ENCODE measurements at regions of chr1 and their contacts with region 1.

Region 1: DNA sequence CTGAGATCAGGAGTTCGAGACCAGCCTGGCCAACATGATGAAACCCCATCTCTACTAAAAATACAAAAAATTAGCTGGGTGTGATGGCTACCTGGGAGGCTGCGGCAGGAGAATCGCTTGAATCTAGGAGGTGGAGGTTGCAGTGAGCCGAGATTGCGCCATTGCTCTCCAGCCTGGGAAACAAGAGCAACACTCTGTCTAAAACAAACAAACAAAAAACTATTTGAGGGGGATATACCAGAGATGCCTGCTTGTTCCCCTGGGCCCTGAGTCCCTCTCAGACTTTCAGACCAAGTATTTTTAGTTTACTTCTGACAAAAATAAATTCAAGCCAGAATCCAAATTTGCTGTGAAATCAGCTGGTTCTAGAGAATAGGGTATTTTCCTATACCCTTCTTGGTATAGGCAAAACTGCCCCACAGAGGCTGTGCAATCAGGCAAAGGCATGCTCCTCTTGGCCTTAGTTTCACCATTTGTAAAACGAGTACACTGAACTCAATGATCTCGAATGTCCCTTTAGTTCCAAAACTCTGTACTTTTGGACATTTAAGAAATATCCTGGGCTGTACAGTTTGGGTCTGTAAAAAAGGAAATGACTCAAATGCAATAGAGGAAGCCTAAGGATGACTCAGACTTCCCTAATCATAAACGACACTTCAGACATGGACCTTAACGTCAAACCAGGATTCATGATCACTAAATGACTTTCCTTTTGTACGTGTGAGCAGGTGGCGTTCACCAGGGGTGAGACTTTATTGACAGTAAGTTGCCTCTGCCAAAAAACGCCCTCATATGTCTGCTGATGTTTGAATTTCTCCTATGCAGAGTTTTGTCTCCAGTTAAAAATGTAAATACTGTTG is 16.1 kb downstream of the ENSA start:
- DNase-seq: peak; percentile 32
- H3K4me3 Mint-ChIP-seq: peak overlapping the region; percentile 23
- H3K27ac Mint-ChIP-seq: peak overlapping the region; percentile 90
- H3K4me1 Mint-ChIP-seq: peaks cover 56% of the 10 kb centered on the region
- H3K27me3 Mint-ChIP-seq: no peaks in the 10 kb centered on the region

Region 2: GRCh38 chr1:150127868-150128267 is 485.4 kb before region 1 on chr1:
- intact Hi-C with region 1: no loop called
- DNase-seq: no peak
- H3K4me3 Mint-ChIP-seq: no peak overlapping the region
- H3K27ac Mint-ChIP-seq: no peak overlapping the region
- H3K4me1 Mint-ChIP-seq: peaks cover 4% of the 10 kb centered on the region
- H3K27me3 Mint-ChIP-seq: no peaks in the 10 kb centered on the region

Region 3: GRCh38 chr1:150148837-150149270 is 464.4 kb before region 1 on chr1:
- intact Hi-C with region 1: no loop called
- DNase-seq: no peak
- H3K4me3 Mint-ChIP-seq: peak overlapping the region; percentile 76
- H3K27ac Mint-ChIP-seq: peak overlapping the region; percentile 28
- H3K4me1 Mint-ChIP-seq: peaks cover 46% of the 10 kb centered on the region
- H3K27me3 Mint-ChIP-seq: peaks cover 23% of the 10 kb centered on the region

Region 4: GRCh38 chr1:150486964-150487762 is 126.1 kb before region 1 on chr1 and contains the start of gene TARS2:
- intact Hi-C with region 1: loop called (anchors 1 kb)
- DNase-seq: peak; percentile 95
- H3K4me3 Mint-ChIP-seq: peak within 1 kb of the TSS; percentile 98
- H3K27ac Mint-ChIP-seq: peak within 1 kb of the TSS; percentile 98
- H3K4me1 Mint-ChIP-seq: peaks cover 18% of the 10 kb centered on the region
- H3K27me3 Mint-ChIP-seq: no peaks in the 10 kb centered on the region
- total RNA-seq, gene TARS2: 66.2 and 69.8 TPM in 2 replicates

Region 5: DNA sequence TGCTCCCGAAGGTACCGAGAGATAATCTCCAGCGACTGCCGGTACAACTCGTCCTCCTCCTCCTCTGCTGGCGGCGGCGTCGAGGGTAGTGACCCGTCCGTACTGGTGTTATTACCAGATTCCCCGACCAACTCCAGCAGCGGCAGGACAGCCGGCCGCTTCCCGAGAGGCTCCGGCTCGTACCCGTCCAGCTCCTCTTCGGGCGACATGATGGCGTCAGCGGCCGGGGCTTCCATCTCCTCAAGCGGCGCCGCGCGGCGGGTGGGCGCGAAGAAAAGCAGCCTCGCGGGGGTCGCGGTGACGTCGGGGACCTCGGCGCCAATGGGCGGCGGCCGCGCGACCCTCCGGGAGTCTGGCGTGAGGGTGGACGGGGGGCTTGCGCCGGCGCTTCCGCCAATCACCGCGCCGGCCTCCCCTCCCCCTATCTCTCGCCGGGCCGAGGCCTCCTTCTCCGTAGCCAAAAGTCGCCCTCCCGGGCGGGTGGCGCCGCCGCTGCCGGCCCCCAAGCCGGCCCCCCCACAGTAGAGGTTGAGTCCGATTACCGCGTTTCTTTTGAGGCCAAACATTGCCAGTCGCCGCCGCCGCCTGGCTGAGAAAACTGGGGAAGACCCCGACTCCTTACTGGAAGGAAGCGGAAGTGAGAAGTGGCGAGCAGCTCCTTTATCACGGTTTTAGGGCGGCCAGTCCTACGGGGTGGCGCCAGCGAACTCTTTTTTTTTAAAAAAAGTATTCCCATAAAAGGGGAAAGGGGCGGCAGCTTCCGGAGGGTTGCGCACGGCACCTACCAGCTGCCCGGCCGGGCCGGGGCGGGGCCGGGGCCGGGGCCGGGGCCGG is 34.1 kb before region 1 on chr1 and contains the start of gene MCL1:
- intact Hi-C with region 1: loop called (anchors 1 kb)
- DNase-seq: peak; percentile 89
- H3K4me3 Mint-ChIP-seq: peak within 1 kb of the TSS; percentile 98
- H3K27ac Mint-ChIP-seq: peak within 1 kb of the TSS; percentile 98
- H3K4me1 Mint-ChIP-seq: peaks cover 30% of the 10 kb centered on the region
- H3K27me3 Mint-ChIP-seq: no peaks in the 10 kb centered on the region
- total RNA-seq, gene MCL1: 217 and 221 TPM in 2 replicates

Region 6: GRCh38 chr1:150696590-150697524 is 83.6 kb after region 1 on chr1 and contains the start of gene GOLPH3L:
- intact Hi-C with region 1: no loop called
- DNase-seq: peak; percentile 91
- H3K4me3 Mint-ChIP-seq: peak within 1 kb of the TSS; percentile 96
- H3K27ac Mint-ChIP-seq: peak within 1 kb of the TSS; percentile 88
- H3K4me1 Mint-ChIP-seq: peaks cover 17% of the 10 kb centered on the region
- H3K27me3 Mint-ChIP-seq: peaks cover 9% of the 10 kb centered on the region
- total RNA-seq, gene GOLPH3L: 21.3 and 22.4 TPM in 2 replicates